Activated CD8-positive, alpha-beta T cell treated with anti-CD3 and anti-CD28 coated beads for 36 hours (primary cell): ENCODE measurements at regions of chr2 and their contacts with region 1.

Region 1: GRCh38 chr2:162073888-162074645 is at the start of gene DPP4:
- DNase-seq: peak; percentile 64
- ATAC-seq: peak; percentile 70
- H3K4me3 Mint-ChIP-seq: peak within 1 kb of the TSS; percentile 88
- H3K27ac Mint-ChIP-seq: peak within 1 kb of the TSS; percentile 89
- H3K4me1 Mint-ChIP-seq: peaks cover 47% of the 10 kb centered on the region
- H3K27me3 Mint-ChIP-seq: no peaks in the 10 kb centered on the region
- CTCF ChIP-seq: peak; percentile 24
- total RNA-seq, gene DPP4: 25.9 to 26.4 TPM

Region 2: GRCh38 chr2:161844834-161845233 is 229.2 kb before region 1 on chr2:
- CTCF ChIA-PET with region 1: no interaction called
- POLR2A ChIA-PET with region 1: no interaction called
- intact Hi-C with region 1: no loop called
- DNase-seq: no peak
- ATAC-seq: no peak
- H3K4me3 Mint-ChIP-seq: no peak overlapping the region
- H3K27ac Mint-ChIP-seq: no peak overlapping the region
- H3K4me1 Mint-ChIP-seq: no peaks in the 10 kb centered on the region
- H3K27me3 Mint-ChIP-seq: peaks cover 4% of the 10 kb centered on the region
- CTCF ChIP-seq: no peak

Region 3: DNA sequence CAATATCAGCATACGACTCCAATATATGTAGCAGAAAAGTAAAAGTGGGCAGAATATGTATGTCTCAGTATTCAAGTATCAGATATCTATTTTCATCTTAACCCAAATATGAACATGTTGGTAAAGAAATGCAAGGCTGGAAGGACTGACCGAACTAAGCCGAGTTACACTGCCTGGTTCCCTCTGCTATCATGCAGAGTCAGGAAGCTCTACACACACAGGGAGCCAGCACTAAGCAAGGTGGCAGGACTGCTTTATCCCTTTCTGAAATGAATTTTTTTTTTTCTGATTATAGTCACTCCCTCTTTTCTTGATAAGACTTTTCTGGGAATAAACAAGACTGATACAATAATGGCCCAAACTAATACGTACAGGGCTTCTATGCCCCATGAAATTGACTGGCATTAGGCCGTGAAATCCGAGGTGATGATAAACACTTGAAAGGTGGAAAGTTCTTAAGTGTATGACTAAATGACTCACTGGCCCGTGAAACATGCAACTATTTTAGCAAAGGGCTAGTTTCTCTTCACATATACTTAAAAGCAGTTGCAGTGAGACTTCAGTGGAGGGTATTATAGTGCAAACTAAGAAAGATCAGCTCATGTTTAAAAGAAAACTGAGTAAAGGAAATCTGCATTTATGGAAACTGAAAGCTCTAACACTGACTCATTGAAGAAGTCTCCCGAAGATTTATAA is 14.9 kb before region 1 on chr2:
- CTCF ChIA-PET with region 1: interaction called, 26 read pairs
- POLR2A ChIA-PET with region 1: interaction called, 65 read pairs
- intact Hi-C with region 1: no loop called
- DNase-seq: peak; percentile 51
- ATAC-seq: peak; percentile 79
- H3K4me3 Mint-ChIP-seq: peak overlapping the region; percentile 52
- H3K27ac Mint-ChIP-seq: peak overlapping the region; percentile 94
- H3K4me1 Mint-ChIP-seq: peaks cover 86% of the 10 kb centered on the region
- H3K27me3 Mint-ChIP-seq: no peaks in the 10 kb centered on the region
- CTCF ChIP-seq: no peak